Panc1 (cell line): ENCODE measurements at regions of chr3 and their contacts with region 1.

Region 1: DNA sequence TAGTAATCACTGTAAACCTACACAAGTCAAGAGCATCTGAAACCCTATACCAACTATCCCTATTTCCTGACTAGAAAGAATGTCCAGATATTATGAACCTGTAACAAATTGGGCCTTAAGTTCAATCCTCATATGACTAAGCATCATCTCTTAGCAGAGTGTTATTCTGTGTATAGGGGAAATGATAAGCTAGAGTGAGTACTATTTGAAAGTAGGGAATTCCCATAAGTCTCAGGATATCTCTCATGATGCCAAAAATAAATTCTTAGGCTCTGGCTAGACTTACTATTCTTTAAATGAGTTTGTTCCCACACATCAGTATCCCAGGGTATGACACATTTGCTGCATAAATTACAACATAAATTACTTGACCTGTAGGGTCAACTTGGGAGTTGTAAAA is 15.3 kb downstream of the MRPL47 start:
- DNase-seq: no peak
- ATAC-seq: no peak
- H3K4me3 ChIP-seq: no peak overlapping the region
- H3K27ac ChIP-seq: no peak overlapping the region
- H3K4me1 ChIP-seq: no peaks in the 10 kb centered on the region
- H3K27me3 ChIP-seq: no peaks in the 10 kb centered on the region
- CTCF ChIP-seq: no peak

Region 2: GRCh38 chr3:179037351-179037750 is 551.8 kb before region 1 on chr3:
- CTCF ChIA-PET with region 1: no interaction called
- POLR2A ChIA-PET with region 1: no interaction called
- in situ Hi-C with region 1: no loop called
- intact Hi-C with region 1: no loop called
- DNase-seq: no peak
- ATAC-seq: no peak
- H3K4me3 ChIP-seq: no peak overlapping the region
- H3K27ac ChIP-seq: no peak overlapping the region
- H3K4me1 ChIP-seq: no peaks in the 10 kb centered on the region
- H3K27me3 ChIP-seq: no peaks in the 10 kb centered on the region
- CTCF ChIP-seq: no peak

Region 3: GRCh38 chr3:179369621-179370020 is 219.5 kb before region 1 on chr3:
- CTCF ChIA-PET with region 1: no interaction called
- POLR2A ChIA-PET with region 1: interaction called, 11 read pairs
- in situ Hi-C with region 1: no loop called
- intact Hi-C with region 1: no loop called
- DNase-seq: no peak
- ATAC-seq: no peak
- H3K4me3 ChIP-seq: no peak overlapping the region
- H3K27ac ChIP-seq: no peak overlapping the region
- H3K4me1 ChIP-seq: no peaks in the 10 kb centered on the region
- H3K27me3 ChIP-seq: no peaks in the 10 kb centered on the region
- CTCF ChIP-seq: no peak